Endothelial cell of umbilical vein (primary cell): ENCODE measurements at regions of chr3 and their contacts with region 1.

Region 1: GRCh38 chr3:57397175-57398026 is 104.9 kb upstream of the ASB14 start:
- DNase-seq: peak; percentile 62
- H3K4me3 ChIP-seq: no peak overlapping the region
- H3K27ac ChIP-seq: no peak overlapping the region
- H3K4me1 ChIP-seq: no peaks in the 10 kb centered on the region
- H3K27me3 ChIP-seq: no peaks in the 10 kb centered on the region
- CTCF ChIP-seq: peak; percentile 90 to 95
- POLR2A ChIP-seq: no peak

Region 2: DNA sequence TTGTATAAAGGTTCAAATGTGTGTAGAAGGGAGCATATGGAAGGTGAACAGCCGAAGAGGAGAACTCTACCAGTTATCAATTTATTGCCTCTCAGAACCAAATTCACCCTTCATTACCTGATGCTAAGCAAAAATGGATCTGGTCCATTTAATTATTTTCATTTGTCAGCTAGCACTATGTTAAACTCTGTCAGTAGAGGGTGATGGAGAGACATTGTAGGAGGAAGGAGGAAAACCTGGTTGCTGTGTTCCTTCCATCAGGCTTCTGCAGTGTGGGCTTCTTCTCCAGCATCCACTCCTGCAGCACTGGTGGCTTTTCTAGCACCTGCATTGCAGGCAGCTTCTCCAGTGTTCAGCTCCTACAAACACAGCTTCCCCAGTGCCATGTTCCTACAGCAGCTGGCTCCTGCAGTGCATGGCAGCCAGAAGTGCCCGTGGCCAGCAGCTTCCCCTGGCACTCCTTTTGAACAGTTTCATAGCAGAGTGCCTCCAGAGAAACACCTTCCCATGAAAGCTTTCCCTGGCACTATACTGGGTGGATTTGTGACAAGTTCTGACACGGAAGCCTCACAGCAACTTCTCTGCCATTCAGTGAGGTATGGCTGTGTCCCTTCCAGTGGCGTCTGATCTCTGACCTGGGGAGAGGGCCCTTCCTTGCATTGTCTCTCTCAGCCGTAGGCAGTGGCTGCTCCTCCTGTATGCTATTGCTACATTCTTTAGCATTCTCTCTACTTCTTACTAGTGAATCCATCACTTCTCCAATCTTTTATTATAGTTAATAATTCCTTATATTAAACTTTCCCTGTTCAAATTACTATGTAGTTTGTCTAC is 217.6 kb before region 1 on chr3:
- CTCF ChIA-PET with region 1: interaction called, 13 read pairs
- POLR2A ChIA-PET with region 1: no interaction called
- dilution Hi-C with region 1: no loop called
- intact Hi-C with region 1: no loop called
- DNase-seq: peak; percentile 30
- H3K4me3 ChIP-seq: no peak overlapping the region
- H3K27ac ChIP-seq: no peak overlapping the region
- H3K4me1 ChIP-seq: no peaks in the 10 kb centered on the region
- H3K27me3 ChIP-seq: peaks cover 13 to 16% of the 10 kb centered on the region in 2 experiments
- CTCF ChIP-seq: peak; percentile 22 to 30
- POLR2A ChIP-seq: no peak

Region 3: DNA sequence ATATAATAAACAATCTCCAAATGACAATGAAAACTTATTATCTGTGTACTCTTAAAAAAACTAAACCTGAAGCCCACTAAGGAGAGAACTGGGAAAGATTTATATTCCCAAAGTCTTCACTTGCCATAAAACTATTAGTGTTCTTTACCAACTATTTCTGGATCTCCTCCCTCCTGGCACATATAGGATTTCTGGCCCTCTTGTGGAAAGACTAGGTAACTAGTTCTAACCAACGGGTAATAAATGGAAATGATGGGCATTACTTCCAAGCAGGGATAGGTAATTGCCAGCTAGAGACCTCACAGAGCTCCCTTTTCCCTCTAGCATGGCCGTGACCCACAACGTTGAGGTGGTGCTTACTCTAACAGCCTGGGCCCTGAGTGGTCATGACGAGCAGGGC is 36.6 kb after region 1 on chr3:
- CTCF ChIA-PET with region 1: interaction called, 47 read pairs
- POLR2A ChIA-PET with region 1: no interaction called
- dilution Hi-C with region 1: no loop called
- intact Hi-C with region 1: loop called (anchors 1 kb)
- DNase-seq: peak; percentile 57
- H3K4me3 ChIP-seq: no peak overlapping the region
- H3K27ac ChIP-seq: no peak overlapping the region
- H3K4me1 ChIP-seq: no peaks in the 10 kb centered on the region
- H3K27me3 ChIP-seq: no peaks in the 10 kb centered on the region
- CTCF ChIP-seq: peak; percentile 24 to 48
- POLR2A ChIP-seq: no peak

Region 4: GRCh38 chr3:57555738-57556458 is 158.5 kb after region 1 on chr3 and contains the start of gene PDE12:
- CTCF ChIA-PET with region 1: interaction called, 27 read pairs
- POLR2A ChIA-PET with region 1: no interaction called
- dilution Hi-C with region 1: no loop called
- intact Hi-C with region 1: no loop called
- DNase-seq: peak; percentile 89
- H3K4me3 ChIP-seq: peak within 1 kb of the TSS; percentile 44 to 84 (median 48)
- H3K27ac ChIP-seq: peak within 1 kb of the TSS; percentile 81
- H3K4me1 ChIP-seq: peaks cover 16% of the 10 kb centered on the region
- H3K27me3 ChIP-seq: no peaks in the 10 kb centered on the region
- CTCF ChIP-seq: no peak
- POLR2A ChIP-seq: peak; percentile 90
- total RNA-seq, gene PDE12: 19.0 and 20.4 TPM in 2 replicates

Region 5: GRCh38 chr3:57627976-57628375 is 230.6 kb after region 1 on chr3:
- CTCF ChIA-PET with region 1: interaction called, 17 read pairs
- POLR2A ChIA-PET with region 1: no interaction called
- dilution Hi-C with region 1: no loop called
- intact Hi-C with region 1: no loop called
- DNase-seq: no peak
- H3K4me3 ChIP-seq: no peak overlapping the region
- H3K27ac ChIP-seq: no peak overlapping the region
- H3K4me1 ChIP-seq: peaks cover 13% of the 10 kb centered on the region
- H3K27me3 ChIP-seq: no peaks in the 10 kb centered on the region
- CTCF ChIP-seq: no peak
- POLR2A ChIP-seq: no peak

Region 6: DNA sequence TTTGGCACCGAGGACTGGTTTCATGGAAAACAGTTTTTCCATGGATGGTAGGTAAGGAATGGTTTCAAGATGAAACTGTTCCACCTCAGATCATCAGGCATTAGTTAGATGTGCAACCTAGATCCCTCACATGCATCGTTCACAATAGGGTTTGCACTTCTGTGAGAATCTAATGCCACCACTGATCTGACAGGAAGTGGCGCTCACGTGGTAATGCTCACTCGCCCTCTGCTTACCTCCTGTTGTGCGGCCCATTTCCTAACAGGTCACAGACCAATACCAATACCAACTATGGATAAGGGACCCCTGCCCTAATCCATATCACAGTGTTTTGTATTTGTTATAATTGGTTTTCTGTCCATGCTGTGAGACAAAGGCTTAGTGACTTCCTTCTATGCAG is 417.6 kb after region 1 on chr3:
- CTCF ChIA-PET with region 1: no interaction called
- POLR2A ChIA-PET with region 1: no interaction called
- dilution Hi-C with region 1: no loop called
- intact Hi-C with region 1: no loop called
- DNase-seq: no peak
- H3K4me3 ChIP-seq: no peak overlapping the region
- H3K27ac ChIP-seq: no peak overlapping the region
- H3K4me1 ChIP-seq: no peaks in the 10 kb centered on the region
- H3K27me3 ChIP-seq: no peaks in the 10 kb centered on the region
- CTCF ChIP-seq: no peak
- POLR2A ChIP-seq: no peak

Region 7: DNA sequence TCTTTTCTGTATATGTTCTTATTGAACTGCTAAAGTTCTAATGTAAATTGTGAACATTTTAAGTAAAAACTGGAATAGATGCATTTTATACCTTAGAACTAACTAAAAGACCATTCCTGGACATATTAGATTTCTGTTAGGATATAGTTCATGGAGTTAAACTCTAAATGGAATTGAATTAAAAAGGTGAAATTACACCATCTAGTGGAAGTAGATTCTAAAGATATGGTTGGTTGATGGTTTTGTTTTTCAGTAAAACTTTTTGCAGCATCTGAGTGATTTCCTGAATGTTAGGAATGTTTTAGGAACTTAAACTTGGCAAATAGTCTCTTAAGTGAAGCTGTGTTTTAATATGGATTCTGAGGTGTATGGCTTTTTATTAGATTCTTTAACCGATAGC is 455.5 kb after region 1 on chr3:
- CTCF ChIA-PET with region 1: interaction called, 138 read pairs
- POLR2A ChIA-PET with region 1: no interaction called
- dilution Hi-C with region 1: no loop called
- intact Hi-C with region 1: loop called (anchors 1 kb)
- DNase-seq: peak; percentile 54
- H3K4me3 ChIP-seq: no peak overlapping the region
- H3K27ac ChIP-seq: no peak overlapping the region
- H3K4me1 ChIP-seq: no peaks in the 10 kb centered on the region
- H3K27me3 ChIP-seq: no peaks in the 10 kb centered on the region
- CTCF ChIP-seq: peak in 1 of 2 donors; percentile 6
- POLR2A ChIP-seq: no peak